Sciatic nerve (tissue), 2 donors: ENCODE measurements at regions of chr10 and their contacts with region 1.

Region 1: DNA sequence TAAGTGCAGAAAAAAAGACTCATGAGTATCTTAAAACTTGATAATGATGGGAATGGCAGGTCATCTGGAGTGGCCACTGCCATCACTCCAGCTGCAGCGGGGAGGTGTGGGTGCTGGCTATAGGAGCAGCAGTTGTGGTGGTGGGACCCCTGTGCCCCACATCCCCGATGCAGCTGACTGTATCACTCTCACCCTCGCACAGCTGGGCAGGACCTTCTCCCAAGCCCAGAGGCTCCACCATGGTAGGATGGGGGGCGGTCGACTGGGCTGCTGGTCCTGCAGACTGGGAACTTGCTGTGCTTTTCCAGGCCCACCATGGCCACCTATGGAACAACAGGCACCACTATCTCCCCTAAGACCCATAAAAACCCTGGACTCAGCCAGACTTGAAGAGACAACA is 844.4 kb downstream of the SORCS1 start:
- DNase-seq: no peak
- ATAC-seq: no peak

Region 2: GRCh38 chr10:105252908-105253307 is 1067.2 kb before region 1 on chr10:
- intact Hi-C with region 1: no loop called
- DNase-seq: no peak
- ATAC-seq: no peak

Region 3: GRCh38 chr10:105540400-105540799 is 779.7 kb before region 1 on chr10:
- intact Hi-C with region 1: loop called (anchors 10 kb)
- DNase-seq: no peak
- ATAC-seq: no peak

Region 4: DNA sequence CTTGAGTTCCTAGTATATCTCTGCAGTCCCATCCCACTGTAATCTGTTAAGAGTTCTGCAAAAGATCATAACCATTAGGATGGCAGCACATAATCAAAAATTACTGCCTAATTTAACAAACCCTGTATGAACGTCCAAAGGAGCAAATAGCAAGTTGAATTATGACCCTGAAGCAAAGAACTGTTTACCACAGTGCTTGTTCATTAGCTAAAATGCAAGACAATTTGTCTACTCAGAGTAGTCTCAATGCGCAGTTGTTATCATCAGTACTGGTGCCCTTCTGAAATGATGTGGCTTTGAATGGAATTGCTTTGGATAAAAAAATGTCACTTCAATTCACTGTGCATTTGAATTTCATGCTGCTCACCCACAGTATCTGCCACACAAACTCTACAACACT is 27.5 kb after region 1 on chr10:
- intact Hi-C with region 1: no loop called
- DNase-seq: no peak
- ATAC-seq: no peak